ENCODE measurements at regions of chr20 and their contacts with region 1.

Region 1: GRCh38 chr20:50070991-50071888 is 41.7 kb downstream of the UBE2V1 start:
- DNase-seq: peak; percentile 91
- ATAC-seq: peak; percentile 100
- H3K4me3 ChIP-seq: peak overlapping the region in 3 of 5 experiments; percentile 25 to 54 (median 40)
- H3K4me3 Mint-ChIP-seq: peak overlapping the region; percentile 15
- H3K27ac ChIP-seq: no peak overlapping the region
- H3K27ac Mint-ChIP-seq: no peak overlapping the region
- H3K4me1 ChIP-seq: peaks cover 5 to 10% of the 10 kb centered on the region in 2 donors
- H3K4me1 Mint-ChIP-seq: peaks cover 5% of the 10 kb centered on the region
- H3K27me3 ChIP-seq: no peaks in the 10 kb centered on the region
- H3K27me3 Mint-ChIP-seq: no peaks in the 10 kb centered on the region
- CTCF ChIP-seq: peak; percentile 99

Region 2: GRCh38 chr20:49808753-49809152 is 262.5 kb before region 1 on chr20:
- CTCF ChIA-PET with region 1: no interaction called
- POLR2A ChIA-PET with region 1: no interaction called
- intact Hi-C with region 1: no loop called
- DNase-seq: peak; percentile 60
- ATAC-seq: no peak
- H3K4me3 ChIP-seq: no peak overlapping the region
- H3K4me3 Mint-ChIP-seq: no peak overlapping the region
- H3K27ac ChIP-seq: no peak overlapping the region
- H3K27ac Mint-ChIP-seq: no peak overlapping the region
- H3K4me1 ChIP-seq: peaks cover 20 to 23% of the 10 kb centered on the region in 2 donors
- H3K4me1 Mint-ChIP-seq: peaks cover 43% of the 10 kb centered on the region
- H3K27me3 ChIP-seq: no peaks in the 10 kb centered on the region
- H3K27me3 Mint-ChIP-seq: no peaks in the 10 kb centered on the region
- CTCF ChIP-seq: no peak

Region 3: GRCh38 chr20:49865559-49865958 is 205.7 kb before region 1 on chr20:
- CTCF ChIA-PET with region 1: no interaction called
- POLR2A ChIA-PET with region 1: no interaction called
- intact Hi-C with region 1: no loop called
- DNase-seq: no peak
- ATAC-seq: no peak
- H3K4me3 ChIP-seq: no peak overlapping the region
- H3K4me3 Mint-ChIP-seq: no peak overlapping the region
- H3K27ac ChIP-seq: no peak overlapping the region
- H3K27ac Mint-ChIP-seq: no peak overlapping the region
- H3K4me1 ChIP-seq: no peaks in the 10 kb centered on the region
- H3K4me1 Mint-ChIP-seq: peaks cover 6% of the 10 kb centered on the region
- H3K27me3 ChIP-seq: no peaks in the 10 kb centered on the region
- H3K27me3 Mint-ChIP-seq: no peaks in the 10 kb centered on the region
- CTCF ChIP-seq: no peak

Region 4: DNA sequence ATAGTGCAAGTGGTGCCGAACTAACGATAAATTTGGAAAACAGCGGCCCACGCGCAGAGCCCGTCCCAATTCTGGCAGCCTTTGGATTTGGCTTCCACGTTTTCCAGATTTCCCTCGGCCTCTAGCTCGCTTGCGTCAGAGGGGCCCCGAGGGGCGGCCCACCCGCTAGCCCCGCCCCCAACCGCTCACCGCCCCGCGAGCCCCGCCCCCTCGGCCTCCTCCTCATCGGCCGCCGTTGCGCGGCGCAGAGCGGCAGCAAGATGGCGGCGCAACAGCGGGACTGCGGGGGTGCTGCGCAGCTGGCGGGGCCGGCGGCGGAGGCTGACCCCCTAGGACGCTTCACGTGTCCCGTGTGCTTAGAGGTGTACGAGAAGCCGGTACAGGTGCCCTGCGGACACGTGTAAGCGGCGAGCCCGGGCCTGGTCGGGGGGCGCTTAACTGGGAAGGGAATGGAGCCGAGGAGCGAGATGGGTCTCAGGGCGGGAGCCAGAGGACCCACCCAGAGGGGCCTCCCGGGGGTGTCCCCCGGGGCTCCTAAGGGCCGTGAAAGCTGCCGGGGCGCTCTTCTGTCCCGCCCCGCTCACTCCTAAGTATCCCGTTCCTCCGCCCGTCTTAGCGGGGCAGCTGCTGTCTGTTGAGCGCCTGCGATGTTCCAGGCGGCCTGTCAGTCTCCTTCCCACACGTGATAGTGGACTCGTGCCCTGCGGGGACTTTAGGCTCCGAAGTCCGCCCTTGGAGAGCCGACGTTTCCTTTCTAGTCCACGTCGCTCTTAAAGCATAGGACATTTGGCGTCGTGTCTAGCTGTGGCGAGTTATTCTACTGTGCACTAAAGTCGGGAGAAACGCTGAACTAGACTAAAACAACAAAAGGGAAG is 134.8 kb before region 1 on chr20 and contains the start of gene RNF114:
- CTCF ChIA-PET with region 1: interaction called, 10 read pairs
- POLR2A ChIA-PET with region 1: no interaction called
- intact Hi-C with region 1: no loop called
- DNase-seq: peak; percentile 93
- ATAC-seq: peak; percentile 93
- H3K4me3 ChIP-seq: peak within 1 kb of the TSS; percentile 78 to 99 (median 94)
- H3K4me3 Mint-ChIP-seq: peak within 1 kb of the TSS; percentile 99
- H3K27ac ChIP-seq: peak within 1 kb of the TSS; percentile 89 to 90
- H3K27ac Mint-ChIP-seq: peak within 1 kb of the TSS; percentile 93
- H3K4me1 ChIP-seq: peaks cover 33 to 42% of the 10 kb centered on the region in 2 donors
- H3K4me1 Mint-ChIP-seq: peaks cover 49% of the 10 kb centered on the region
- H3K27me3 ChIP-seq: no peaks in the 10 kb centered on the region
- H3K27me3 Mint-ChIP-seq: no peaks in the 10 kb centered on the region
- CTCF ChIP-seq: no peak
- total RNA-seq, gene RNF114: 81.7 and 86.0 TPM in 2 replicates

Region 5: GRCh38 chr20:49999329-49999728 is 71.9 kb before region 1 on chr20:
- CTCF ChIA-PET with region 1: interaction called, 14 read pairs
- POLR2A ChIA-PET with region 1: interaction called, 3 read pairs
- intact Hi-C with region 1: loop called (anchors 5 kb)
- DNase-seq: peak; percentile 82
- ATAC-seq: peak; percentile 98
- H3K4me3 ChIP-seq: no peak overlapping the region
- H3K4me3 Mint-ChIP-seq: peak overlapping the region; percentile 35
- H3K27ac ChIP-seq: no peak overlapping the region
- H3K27ac Mint-ChIP-seq: peak overlapping the region; percentile 5
- H3K4me1 ChIP-seq: peaks cover 8 to 12% of the 10 kb centered on the region in 2 donors
- H3K4me1 Mint-ChIP-seq: peaks cover 18% of the 10 kb centered on the region
- H3K27me3 ChIP-seq: no peaks in the 10 kb centered on the region
- H3K27me3 Mint-ChIP-seq: peaks cover 7% of the 10 kb centered on the region
- CTCF ChIP-seq: no peak

Region 6: GRCh38 chr20:50048420-50049166 is 22.6 kb before region 1 on chr20:
- CTCF ChIA-PET with region 1: interaction called, 20 read pairs
- POLR2A ChIA-PET with region 1: interaction called, 7 read pairs
- intact Hi-C with region 1: no loop called
- DNase-seq: peak; percentile 48
- ATAC-seq: peak; percentile 71
- H3K4me3 ChIP-seq: no peak overlapping the region
- H3K4me3 Mint-ChIP-seq: peak overlapping the region; percentile 53
- H3K27ac ChIP-seq: no peak overlapping the region
- H3K27ac Mint-ChIP-seq: peak overlapping the region; percentile 51
- H3K4me1 ChIP-seq: peaks cover 29 to 35% of the 10 kb centered on the region in 2 donors
- H3K4me1 Mint-ChIP-seq: peaks cover 29% of the 10 kb centered on the region
- H3K27me3 ChIP-seq: no peaks in the 10 kb centered on the region
- H3K27me3 Mint-ChIP-seq: no peaks in the 10 kb centered on the region
- CTCF ChIP-seq: no peak

Region 7: GRCh38 chr20:50098259-50098658 is 27.0 kb after region 1 on chr20:
- CTCF ChIA-PET with region 1: interaction called, 11 read pairs
- POLR2A ChIA-PET with region 1: no interaction called
- intact Hi-C with region 1: no loop called
- DNase-seq: no peak
- ATAC-seq: no peak
- H3K4me3 ChIP-seq: no peak overlapping the region
- H3K4me3 Mint-ChIP-seq: no peak overlapping the region
- H3K27ac ChIP-seq: peak overlapping the region in 1 of 2 donors; percentile 20
- H3K27ac Mint-ChIP-seq: peak overlapping the region; percentile 1
- H3K4me1 ChIP-seq: peaks cover 6 to 14% of the 10 kb centered on the region in 2 donors
- H3K4me1 Mint-ChIP-seq: peaks cover 37% of the 10 kb centered on the region
- H3K27me3 ChIP-seq: no peaks in the 10 kb centered on the region
- H3K27me3 Mint-ChIP-seq: no peaks in the 10 kb centered on the region
- CTCF ChIP-seq: no peak

Region 8: DNA sequence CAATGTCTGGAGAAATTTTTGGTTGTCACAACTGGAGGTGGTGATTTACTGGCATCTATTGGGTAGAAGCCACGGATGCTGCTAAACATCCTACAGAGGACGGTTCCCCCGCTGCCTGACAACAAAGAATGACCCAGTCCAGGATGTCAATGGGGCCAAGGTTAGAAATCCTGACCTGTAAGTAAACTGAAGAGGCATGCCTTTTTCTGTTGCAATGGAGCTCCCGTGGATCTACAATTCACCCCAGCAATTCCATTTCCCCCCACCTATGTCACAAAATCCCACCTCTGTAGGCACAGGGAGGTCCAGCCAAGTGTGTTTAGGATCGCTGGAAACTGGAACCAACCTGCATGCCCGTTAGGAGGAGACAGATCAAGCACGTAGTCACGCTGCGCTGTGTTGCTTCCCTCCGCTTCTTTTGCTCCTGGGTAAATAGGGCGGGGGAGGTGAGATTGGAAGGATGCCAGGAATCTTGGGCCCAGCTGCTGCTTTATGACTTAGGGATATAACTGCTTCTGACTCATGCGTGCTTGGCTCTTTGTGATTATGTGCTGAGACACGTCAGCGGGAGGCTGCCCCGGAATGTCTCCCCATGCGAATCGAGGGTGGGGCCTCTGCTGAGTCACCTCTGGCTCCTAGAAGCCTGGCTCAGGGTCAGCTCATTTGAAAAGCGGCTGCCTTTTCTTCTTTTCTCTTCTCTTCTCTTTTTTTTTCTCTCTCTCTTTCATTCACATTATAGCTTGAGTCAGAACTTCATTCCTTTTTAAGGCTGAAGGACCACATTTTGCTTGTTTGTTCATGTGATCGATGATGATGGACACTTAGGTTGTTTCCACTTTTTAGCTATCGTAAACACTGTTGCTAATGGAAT is 94.7 kb after region 1 on chr20:
- CTCF ChIA-PET with region 1: interaction called, 23 read pairs
- POLR2A ChIA-PET with region 1: no interaction called
- intact Hi-C with region 1: loop called (anchors 1 kb)
- DNase-seq: peak; percentile 74
- ATAC-seq: peak; percentile 97
- H3K4me3 ChIP-seq: peak overlapping the region in 4 of 5 experiments; percentile 24 to 56 (median 47)
- H3K4me3 Mint-ChIP-seq: peak overlapping the region; percentile 84
- H3K27ac ChIP-seq: no peak overlapping the region
- H3K27ac Mint-ChIP-seq: peak overlapping the region; percentile 70
- H3K4me1 ChIP-seq: peaks cover 9 to 10% of the 10 kb centered on the region in 2 donors
- H3K4me1 Mint-ChIP-seq: peaks cover 10% of the 10 kb centered on the region
- H3K27me3 ChIP-seq: peaks cover 0 to 6% (median 2%) of the 10 kb centered on the region in 4 experiments
- H3K27me3 Mint-ChIP-seq: peaks cover 12% of the 10 kb centered on the region
- CTCF ChIP-seq: no peak